ENCODE measurements at regions of chr18 and their contacts with region 1.

Region 1: GRCh38 chr18:74342416-74343043 is 26.9 kb downstream of the C18orf63 start:
- DNase-seq: peak; percentile 39
- ATAC-seq: no peak
- H3K4me3 Mint-ChIP-seq: no peak overlapping the region
- H3K27ac Mint-ChIP-seq: no peak overlapping the region
- H3K4me1 Mint-ChIP-seq: no peaks in the 10 kb centered on the region
- H3K27me3 Mint-ChIP-seq: peaks cover 7% of the 10 kb centered on the region

Region 2: DNA sequence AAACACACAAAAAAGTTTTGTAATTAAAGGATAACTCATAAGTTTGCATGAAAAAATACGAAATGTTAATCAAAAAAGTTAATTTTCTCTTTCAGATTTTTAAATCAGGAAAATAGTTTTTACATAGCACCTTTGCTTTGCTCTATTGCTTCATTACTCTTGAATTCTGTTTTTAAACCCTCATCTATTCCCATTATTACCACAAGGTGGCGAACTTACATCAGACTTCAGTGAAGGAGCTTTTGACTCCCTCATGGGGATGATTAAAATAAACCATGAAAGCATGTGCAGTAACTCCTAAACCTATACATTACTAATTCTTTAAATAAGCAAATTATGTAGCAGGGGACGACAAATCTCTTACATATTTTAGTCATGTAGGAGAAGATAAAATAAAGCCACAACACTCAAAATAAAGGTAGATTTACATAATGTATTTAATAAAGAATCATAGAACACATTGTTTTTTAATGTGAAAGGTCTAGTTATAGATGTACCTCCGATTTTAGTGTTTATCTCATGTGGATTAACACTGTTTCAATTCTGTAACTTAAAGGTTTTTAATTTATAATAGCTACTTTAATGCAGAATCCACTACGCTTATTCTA is 1579.9 kb before region 1 on chr18:
- CTCF ChIA-PET with region 1: no interaction called
- POLR2A ChIA-PET with region 1: no interaction called
- intact Hi-C with region 1: loop called in 1 of 2 experiments (anchors 5 kb)
- DNase-seq: no peak
- ATAC-seq: no peak
- H3K4me3 Mint-ChIP-seq: no peak overlapping the region
- H3K27ac Mint-ChIP-seq: no peak overlapping the region
- H3K4me1 Mint-ChIP-seq: no peaks in the 10 kb centered on the region
- H3K27me3 Mint-ChIP-seq: peaks cover 2% of the 10 kb centered on the region

Region 3: DNA sequence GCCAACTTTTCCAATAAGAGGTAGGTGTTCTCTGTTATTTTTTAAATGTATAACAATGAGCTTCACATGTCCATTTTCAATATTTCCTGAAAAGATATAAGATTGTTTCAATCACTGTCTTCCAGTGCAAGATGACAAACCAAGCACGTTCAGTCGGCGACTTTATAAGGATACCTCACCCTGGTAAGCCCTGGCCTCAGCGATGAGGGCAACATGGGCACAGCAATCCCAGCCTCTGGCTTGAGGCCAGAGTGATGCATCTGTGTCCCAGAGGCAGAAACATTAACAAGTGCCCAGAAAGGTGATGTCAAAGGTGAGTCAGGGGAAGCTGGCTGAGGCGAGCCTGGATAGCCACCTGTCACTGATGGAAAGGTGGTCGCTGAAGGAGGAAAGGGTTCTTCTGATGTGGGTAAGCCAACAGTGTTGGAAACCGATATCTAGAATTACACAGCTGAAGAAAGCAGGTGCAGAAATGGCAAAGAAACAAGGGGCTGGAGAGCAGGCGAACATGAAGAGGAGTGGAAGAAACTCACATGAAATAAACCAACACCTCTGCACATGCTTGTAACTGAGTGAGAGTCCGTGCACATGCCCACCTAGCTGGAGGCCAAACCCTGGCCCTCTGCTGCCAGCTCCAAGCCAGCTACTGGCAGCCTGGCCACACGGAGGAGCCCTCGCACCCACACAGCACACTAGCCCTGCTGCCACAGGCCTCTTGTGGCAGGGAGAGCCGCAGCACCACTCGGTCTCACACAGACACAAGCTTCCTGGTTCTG is 260.4 kb before region 1 on chr18:
- CTCF ChIA-PET with region 1: interaction called, 10 read pairs
- POLR2A ChIA-PET with region 1: no interaction called
- intact Hi-C with region 1: no loop called
- DNase-seq: peak; percentile 84
- ATAC-seq: peak; percentile 95
- H3K4me3 Mint-ChIP-seq: peak overlapping the region; percentile 58
- H3K27ac Mint-ChIP-seq: peak overlapping the region; percentile 96
- H3K4me1 Mint-ChIP-seq: peaks cover 18% of the 10 kb centered on the region
- H3K27me3 Mint-ChIP-seq: no peaks in the 10 kb centered on the region

Region 4: GRCh38 chr18:74242438-74243096 is 100.0 kb before region 1 on chr18:
- CTCF ChIA-PET with region 1: interaction called, 6 read pairs
- POLR2A ChIA-PET with region 1: no interaction called
- intact Hi-C with region 1: loop called in 1 of 2 experiments (anchors 2 kb)
- DNase-seq: peak; percentile 20
- ATAC-seq: no peak
- H3K4me3 Mint-ChIP-seq: no peak overlapping the region
- H3K27ac Mint-ChIP-seq: no peak overlapping the region
- H3K4me1 Mint-ChIP-seq: peaks cover 2% of the 10 kb centered on the region
- H3K27me3 Mint-ChIP-seq: peaks cover 6% of the 10 kb centered on the region

Region 5: GRCh38 chr18:74398981-74399887 is 56.7 kb after region 1 on chr18:
- CTCF ChIA-PET with region 1: no interaction called
- POLR2A ChIA-PET with region 1: no interaction called
- intact Hi-C with region 1: no loop called
- DNase-seq: no peak
- ATAC-seq: no peak
- H3K4me3 Mint-ChIP-seq: no peak overlapping the region
- H3K27ac Mint-ChIP-seq: no peak overlapping the region
- H3K4me1 Mint-ChIP-seq: peaks cover 5% of the 10 kb centered on the region
- H3K27me3 Mint-ChIP-seq: peaks cover 5% of the 10 kb centered on the region

Region 6: GRCh38 chr18:74551936-74552555 is 209.5 kb after region 1 on chr18:
- CTCF ChIA-PET with region 1: interaction called, 12 read pairs
- POLR2A ChIA-PET with region 1: no interaction called
- intact Hi-C with region 1: no loop called
- DNase-seq: peak; percentile 88
- ATAC-seq: peak; percentile 100
- H3K4me3 Mint-ChIP-seq: no peak overlapping the region
- H3K27ac Mint-ChIP-seq: no peak overlapping the region
- H3K4me1 Mint-ChIP-seq: no peaks in the 10 kb centered on the region
- H3K27me3 Mint-ChIP-seq: peaks cover 5% of the 10 kb centered on the region